H1 (cell line): ENCODE measurements at regions of chr4 and their contacts with region 1.

Region 1: GRCh38 chr4:4541661-4542570 is at the start of gene STX18:
- DNase-seq: peak; percentile 44 to 99
- H3K4me3 ChIP-seq: peak within 1 kb of the TSS; percentile 88 to 95 (median 90)
- H3K27ac ChIP-seq: peak within 1 kb of the TSS; percentile 86
- H3K4me1 ChIP-seq: 0 out of 7 replicates have a peak, but pooled peaks cover 0 to 3% (median 0%) of the 10 kb centered on the region in 4 experiments
- H3K27me3 ChIP-seq: no peaks in the 10 kb centered on the region
- CTCF ChIP-seq: peak in 1 of 3 experiments; percentile 5; a peak in 1 of 4 replicates
- EP300 ChIP-seq: peak; percentile 59 to 88
- POLR2A ChIP-seq: peak in 1 of 2 experiments; percentile 86; a peak in 2 of 3 replicates
- RAD21 ChIP-seq: peak; percentile 18 to 41; a peak in 3 of 4 replicates
- total RNA-seq, gene STX18: 18.3 and 20.0 TPM in 2 replicates

Region 2: GRCh38 chr4:4418676-4419390 is 123.1 kb before region 1 on chr4:
- CTCF ChIA-PET with region 1: no interaction called
- POLR2A ChIA-PET with region 1: no interaction called
- DNase-seq: peak in 1 of 2 experiments; percentile 30
- H3K4me3 ChIP-seq: no peak overlapping the region
- H3K27ac ChIP-seq: no peak overlapping the region
- H3K4me1 ChIP-seq: peaks cover 2 to 11% (median 7%) of the 10 kb centered on the region in 4 experiments
- H3K27me3 ChIP-seq: no peaks in the 10 kb centered on the region
- CTCF ChIP-seq: no peak
- EP300 ChIP-seq: no peak
- POLR2A ChIP-seq: no peak
- RAD21 ChIP-seq: no peak

Region 3: GRCh38 chr4:4555916-4556315 is 14.0 kb after region 1 on chr4:
- CTCF ChIA-PET with region 1: interaction called, 15 read pairs
- POLR2A ChIA-PET with region 1: interaction called, 12 read pairs
- DNase-seq: no peak
- H3K4me3 ChIP-seq: no peak overlapping the region
- H3K27ac ChIP-seq: no peak overlapping the region
- H3K4me1 ChIP-seq: peaks cover 0 to 4% (median 1%) of the 10 kb centered on the region in 4 experiments; a peak in 2 of 7 replicates
- H3K27me3 ChIP-seq: no peaks in the 10 kb centered on the region
- CTCF ChIP-seq: no peak
- EP300 ChIP-seq: no peak
- POLR2A ChIP-seq: no peak
- RAD21 ChIP-seq: no peak

Region 4: DNA sequence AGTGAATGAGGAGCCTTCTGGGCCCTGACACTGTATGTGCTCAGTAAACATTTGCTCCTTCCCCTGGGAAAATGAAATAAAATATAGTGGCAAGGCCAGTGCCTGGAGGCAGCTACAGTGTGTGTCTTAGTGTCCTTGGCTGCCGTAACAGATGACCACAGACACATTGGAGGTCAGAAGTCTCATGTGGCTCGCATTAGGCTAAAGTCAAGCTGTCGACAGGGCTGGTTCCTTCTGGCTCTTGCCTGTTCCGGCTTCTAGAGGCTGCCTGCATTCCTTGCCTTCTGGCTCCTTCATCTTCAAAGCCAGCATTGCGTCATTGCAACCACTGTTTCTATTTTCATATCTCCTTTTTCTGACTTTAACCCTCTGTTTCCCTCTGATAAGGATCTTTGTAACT is 83.6 kb after region 1 on chr4:
- CTCF ChIA-PET with region 1: no interaction called
- POLR2A ChIA-PET with region 1: no interaction called
- DNase-seq: no peak
- H3K4me3 ChIP-seq: no peak overlapping the region
- H3K27ac ChIP-seq: no peak overlapping the region
- H3K4me1 ChIP-seq: peaks cover 0 to 6% (median 0%) of the 10 kb centered on the region in 4 experiments; a peak in 3 of 7 replicates
- H3K27me3 ChIP-seq: no peaks in the 10 kb centered on the region
- CTCF ChIP-seq: no peak
- EP300 ChIP-seq: no peak
- POLR2A ChIP-seq: no peak
- RAD21 ChIP-seq: no peak